ENCODE measurements at regions of chr19 and their contacts with region 1.

Region 1: DNA sequence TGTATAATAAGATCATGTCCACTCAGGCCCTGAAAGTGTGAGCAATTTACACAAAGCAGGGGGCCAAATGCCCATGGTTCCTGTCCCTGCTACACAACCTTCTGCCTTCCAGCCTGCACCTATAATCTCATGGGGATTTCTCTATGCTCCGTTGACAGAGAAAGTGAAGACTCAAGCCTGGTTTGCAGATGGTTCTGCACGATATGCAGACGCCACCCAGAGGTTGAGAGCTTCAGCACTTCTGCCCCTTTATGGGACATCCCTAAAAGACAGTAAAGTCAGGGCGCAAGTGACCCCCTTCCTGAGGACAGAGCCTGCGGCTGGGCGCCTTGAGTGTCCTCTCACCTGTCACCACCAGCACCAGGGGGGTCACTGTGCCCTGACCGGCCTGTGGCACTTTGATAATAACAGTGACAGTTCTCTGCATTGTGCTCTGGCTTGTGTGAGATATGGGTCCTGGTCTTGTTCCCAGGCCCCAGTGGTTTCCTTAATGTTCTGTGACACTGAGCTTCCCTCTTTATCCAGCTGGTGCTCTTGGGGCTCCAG is 15.1 kb downstream of the LILRA5 start:
- DNase-seq: no peak
- ATAC-seq: no peak
- H3K4me3 ChIP-seq: no peak overlapping the region
- H3K4me3 Mint-ChIP-seq: no peak overlapping the region
- H3K27ac ChIP-seq: no peak overlapping the region
- H3K27ac Mint-ChIP-seq: no peak overlapping the region
- H3K4me1 ChIP-seq: no peaks in the 10 kb centered on the region
- H3K4me1 Mint-ChIP-seq: no peaks in the 10 kb centered on the region
- H3K27me3 ChIP-seq: peaks cover 2% of the 10 kb centered on the region
- H3K27me3 Mint-ChIP-seq: peaks cover 7 to 13% of the 10 kb centered on the region in 2 donors
- CTCF ChIP-seq: no peak

Region 2: GRCh38 chr19:54281007-54281728 is 16.7 kb before region 1 on chr19 and contains the start of gene LILRB2:
- intact Hi-C with region 1: no loop called
- DNase-seq: no peak
- ATAC-seq: peak in 1 of 3 donors; percentile 48
- H3K4me3 ChIP-seq: peak within 1 kb of the TSS; percentile 10
- H3K4me3 Mint-ChIP-seq: no peak within 1 kb of the TSS
- H3K27ac ChIP-seq: no peak within 1 kb of the TSS
- H3K27ac Mint-ChIP-seq: no peak within 1 kb of the TSS
- H3K4me1 ChIP-seq: peaks cover 43% of the 10 kb centered on the region
- H3K4me1 Mint-ChIP-seq: peaks cover 12 to 28% of the 10 kb centered on the region in 2 donors
- H3K27me3 ChIP-seq: no peaks in the 10 kb centered on the region
- H3K27me3 Mint-ChIP-seq: peaks cover 7 to 18% of the 10 kb centered on the region in 2 donors
- CTCF ChIP-seq: no peak
- total RNA-seq, gene LILRB2: 4.6 to 41.4 (median 23.7) TPM

Region 3: DNA sequence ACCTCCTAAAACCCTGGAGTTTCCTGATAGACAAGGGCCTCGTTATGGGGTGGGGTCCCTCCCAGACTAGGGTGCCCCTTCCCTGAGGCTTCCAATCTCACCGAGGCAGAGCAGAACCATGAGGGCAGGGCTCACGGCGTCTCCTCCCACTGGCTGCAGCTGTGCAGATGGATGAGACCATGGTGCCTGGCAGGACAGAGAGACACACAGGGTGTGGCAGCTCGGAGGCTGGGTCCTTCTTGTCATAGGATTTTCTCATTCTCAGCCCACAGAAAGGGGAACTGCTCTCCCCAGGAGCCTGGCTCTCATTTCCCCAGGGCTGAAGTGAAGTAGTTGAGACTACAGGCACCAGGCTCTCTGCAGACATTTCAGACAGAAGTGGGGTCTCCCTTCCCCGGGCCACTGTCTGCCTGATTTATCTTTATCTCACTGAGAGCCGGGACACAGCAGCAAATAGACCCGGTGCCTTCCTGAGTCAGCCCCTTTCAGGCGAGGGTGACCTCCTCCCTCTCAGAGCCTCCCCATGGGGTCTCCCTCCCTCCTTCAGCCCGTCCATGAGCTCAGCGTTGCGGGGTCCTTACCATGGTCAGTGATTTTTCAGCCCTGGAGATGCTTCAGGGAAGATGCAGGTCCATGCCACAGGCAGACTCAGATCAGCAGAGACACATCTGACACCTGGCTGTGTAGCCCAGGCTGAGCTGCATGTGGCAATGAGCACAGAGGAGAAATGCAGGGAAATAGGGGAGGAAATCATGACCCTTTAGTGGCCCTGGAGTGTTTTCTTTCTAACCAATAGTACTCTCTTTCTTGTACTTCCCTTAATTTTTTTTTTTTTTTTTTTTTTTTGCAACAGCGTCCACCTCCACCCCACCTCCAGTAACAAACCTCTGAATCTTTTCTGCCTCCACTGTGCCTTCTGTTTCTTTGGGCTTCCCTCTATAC is 14.9 kb after region 1 on chr19 and contains the start of gene LILRA5:
- intact Hi-C with region 1: no loop called
- DNase-seq: no peak
- ATAC-seq: peak; percentile 36 to 58 (median 38)
- H3K4me3 ChIP-seq: no peak within 1 kb of the TSS
- H3K4me3 Mint-ChIP-seq: no peak within 1 kb of the TSS
- H3K27ac ChIP-seq: peak within 1 kb of the TSS; percentile 46
- H3K27ac Mint-ChIP-seq: peak within 1 kb of the TSS in 1 of 2 donors; percentile 74
- H3K4me1 ChIP-seq: peaks cover 10% of the 10 kb centered on the region
- H3K4me1 Mint-ChIP-seq: peaks cover 0 to 4% of the 10 kb centered on the region in 2 donors
- H3K27me3 ChIP-seq: peaks cover 3% of the 10 kb centered on the region
- H3K27me3 Mint-ChIP-seq: peaks cover 20 to 27% of the 10 kb centered on the region in 2 donors
- CTCF ChIP-seq: no peak
- total RNA-seq, gene LILRA5: 3.4 to 22.3 (median 11.1) TPM

Region 4: GRCh38 chr19:54630782-54631181 is 332.9 kb after region 1 on chr19:
- intact Hi-C with region 1: loop called (anchors 2 kb)
- DNase-seq: no peak
- ATAC-seq: peak in 1 of 3 donors; percentile 35
- H3K4me3 ChIP-seq: peak overlapping the region; percentile 4
- H3K4me3 Mint-ChIP-seq: peak overlapping the region; percentile 60
- H3K27ac ChIP-seq: no peak overlapping the region
- H3K27ac Mint-ChIP-seq: peak overlapping the region; percentile 41 to 66
- H3K4me1 ChIP-seq: peaks cover 32% of the 10 kb centered on the region
- H3K4me1 Mint-ChIP-seq: peaks cover 19 to 34% of the 10 kb centered on the region in 2 donors
- H3K27me3 ChIP-seq: no peaks in the 10 kb centered on the region
- H3K27me3 Mint-ChIP-seq: peaks cover 9 to 13% of the 10 kb centered on the region in 2 donors
- CTCF ChIP-seq: no peak

Measured in natural killer cell (primary cell).